ENCODE measurements at regions of chr20 and their contacts with region 1.

Region 1: DNA sequence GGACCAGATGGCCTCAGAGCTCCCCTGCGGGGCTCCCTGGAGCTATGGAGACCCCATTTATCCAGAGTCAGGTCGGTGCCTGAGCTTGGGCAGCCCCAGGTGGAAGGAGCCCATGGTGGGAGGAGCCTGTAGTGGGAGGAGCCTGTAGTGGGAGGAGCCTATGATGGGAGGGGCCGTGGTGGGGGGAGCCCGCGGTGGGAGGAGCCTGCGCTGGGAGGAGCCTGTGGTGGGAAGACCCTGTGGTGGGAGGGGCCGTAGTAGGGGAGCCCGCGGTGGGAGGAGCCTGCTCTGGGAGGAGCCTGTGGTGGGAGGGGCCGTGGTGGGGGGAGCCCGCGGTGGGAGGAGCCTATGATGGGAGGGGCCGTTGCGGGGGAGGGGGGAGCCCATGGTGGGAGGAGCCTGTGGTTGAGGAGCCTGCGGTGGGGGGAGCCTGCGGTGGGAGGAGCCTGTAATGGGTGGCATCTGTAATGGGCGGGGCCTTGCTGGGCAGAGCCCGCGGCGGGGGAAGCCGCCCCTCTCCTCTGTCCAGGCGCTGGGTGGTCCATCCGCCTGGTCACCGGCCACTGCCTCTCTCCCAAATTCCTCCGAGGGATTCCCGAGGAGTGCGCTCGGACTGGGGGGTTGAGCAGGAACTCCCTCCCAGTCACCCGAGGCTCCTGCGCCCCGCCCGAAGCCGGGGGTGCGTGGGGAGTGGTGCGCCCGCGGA is 579 bp upstream of the FNDC11 start:
- DNase-seq: peak; percentile 64
- H3K4me3 ChIP-seq: peak overlapping the region; percentile 53 to 66 (median 58)
- H3K27ac ChIP-seq: no peak overlapping the region
- H3K4me1 ChIP-seq: peaks cover 12% of the 10 kb centered on the region
- H3K27me3 ChIP-seq: no peaks in the 10 kb centered on the region
- CTCF ChIP-seq: no peak

Region 2: DNA sequence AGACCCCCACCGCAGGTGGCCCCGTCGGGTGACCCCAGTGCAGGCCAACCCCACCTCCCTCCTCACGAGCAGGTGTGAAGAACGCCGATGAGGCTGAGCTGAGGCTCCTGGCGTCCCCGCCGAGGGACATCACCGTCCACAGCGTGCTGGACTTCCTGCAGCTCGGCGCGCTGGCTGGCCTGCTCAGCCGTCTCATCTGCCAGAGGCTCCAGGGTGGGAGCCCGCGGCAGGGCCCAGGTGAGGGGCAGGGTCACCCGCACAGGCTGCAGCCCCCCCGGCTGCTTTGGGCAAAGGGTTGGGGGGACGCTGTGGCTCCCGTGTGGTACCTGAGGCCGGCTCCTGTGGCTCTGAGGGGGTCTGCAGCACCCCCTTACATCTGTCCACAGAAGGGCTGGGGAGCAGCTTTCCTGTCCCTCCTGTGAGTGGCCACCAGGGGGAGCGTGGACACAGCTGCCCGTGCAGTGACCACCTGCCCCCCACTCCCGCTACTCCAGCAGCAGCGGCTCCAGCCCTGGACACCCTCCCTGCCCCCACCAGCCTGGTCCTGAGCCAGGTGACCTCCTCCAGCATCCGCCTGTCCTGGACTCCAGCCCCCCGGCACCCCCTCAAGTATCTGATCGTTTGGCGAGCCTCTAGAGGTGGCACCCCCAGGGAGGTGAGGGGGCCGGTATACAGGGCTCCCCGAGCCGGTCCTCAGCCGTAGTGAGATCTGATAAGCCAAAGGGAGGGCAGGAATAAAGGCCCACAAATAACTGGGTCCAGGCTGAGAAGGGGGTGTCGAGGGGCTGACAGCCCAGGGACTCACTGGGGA is 243.9 kb before region 1 on chr20:
- CTCF ChIA-PET with region 1: interaction called, 40 read pairs
- dilution Hi-C with region 1: no loop called
- in situ Hi-C with region 1: no loop called
- intact Hi-C with region 1: no loop called
- DNase-seq: no peak
- H3K4me3 ChIP-seq: no peak overlapping the region
- H3K27ac ChIP-seq: no peak overlapping the region
- H3K4me1 ChIP-seq: no peaks in the 10 kb centered on the region
- H3K27me3 ChIP-seq: peaks cover 3% of the 10 kb centered on the region
- CTCF ChIP-seq: peak; percentile 55 to 82

Region 3: GRCh38 chr20:63594043-63594561 is 40.7 kb after region 1 on chr20:
- CTCF ChIA-PET with region 1: no interaction called
- dilution Hi-C with region 1: no loop called
- in situ Hi-C with region 1: no loop called
- intact Hi-C with region 1: no loop called
- DNase-seq: no peak
- H3K4me3 ChIP-seq: no peak overlapping the region
- H3K27ac ChIP-seq: no peak overlapping the region
- H3K4me1 ChIP-seq: peaks cover 9% of the 10 kb centered on the region
- H3K27me3 ChIP-seq: no peaks in the 10 kb centered on the region
- CTCF ChIP-seq: no peak

Region 4: DNA sequence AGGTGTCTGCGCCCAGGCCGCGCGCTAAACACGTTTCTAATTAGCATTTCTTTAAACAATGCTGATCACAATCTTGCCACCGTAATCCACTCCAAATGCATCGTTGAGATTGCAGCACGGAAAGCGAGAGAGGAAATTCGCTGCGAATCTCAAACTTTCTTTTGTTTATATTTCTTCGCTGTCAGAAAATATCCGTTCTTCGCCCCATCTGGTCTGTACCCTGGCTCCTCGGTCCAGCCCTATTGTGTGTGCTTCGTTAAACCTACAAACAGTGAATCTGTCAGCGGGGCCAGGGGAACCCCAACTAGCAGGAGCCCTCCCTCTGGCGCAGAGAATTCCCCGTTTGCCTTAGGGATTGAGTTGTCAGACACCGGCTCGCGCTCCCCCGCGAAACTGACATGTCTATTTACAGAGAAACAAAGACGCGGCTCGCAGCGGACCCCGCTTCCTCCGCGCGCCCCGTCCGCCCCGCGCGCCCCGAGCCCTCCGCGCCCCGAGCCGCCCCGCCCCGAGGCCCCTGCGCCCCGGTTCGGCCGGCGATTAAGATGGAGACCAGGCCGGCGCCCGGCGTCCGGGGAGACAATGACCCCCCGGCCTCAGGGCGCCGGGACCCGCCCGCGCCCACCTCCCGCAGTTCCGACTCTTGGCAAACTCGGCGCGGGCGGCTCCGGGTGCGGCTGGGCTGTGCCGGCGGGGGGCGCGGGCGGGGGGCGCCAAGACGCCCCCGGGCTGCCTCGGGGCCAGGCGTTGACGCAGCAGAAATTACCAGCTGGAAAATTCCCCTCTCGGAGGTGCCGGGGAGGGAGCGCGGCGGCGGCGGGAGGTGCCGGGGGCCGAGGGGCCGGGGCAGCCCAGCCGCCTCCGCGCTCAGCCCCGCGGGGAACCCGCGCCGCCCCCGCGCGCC is 276.8 kb after region 1 on chr20:
- CTCF ChIA-PET with region 1: no interaction called
- dilution Hi-C with region 1: loop called (anchors 10 kb)
- in situ Hi-C with region 1: no loop called
- intact Hi-C with region 1: no loop called
- DNase-seq: peak; percentile 30
- H3K4me3 ChIP-seq: peak overlapping the region in 2 of 3 experiments; percentile 16 to 29
- H3K27ac ChIP-seq: no peak overlapping the region
- H3K4me1 ChIP-seq: peaks cover 20% of the 10 kb centered on the region
- H3K27me3 ChIP-seq: peaks cover 19% of the 10 kb centered on the region
- CTCF ChIP-seq: no peak